Activated B cell treated with CpG ODN at 0.5 μM for 24 hours (primary cell): ENCODE measurements at regions of chr2 and their contacts with region 1.

Region 1: GRCh38 chr2:241102239-241102803 is at the start of gene MTERF4:
- DNase-seq: peak; percentile 85
- ATAC-seq: peak; percentile 92
- H3K4me3 Mint-ChIP-seq: peak within 1 kb of the TSS; percentile 97
- H3K27ac Mint-ChIP-seq: peak within 1 kb of the TSS; percentile 98
- H3K4me1 Mint-ChIP-seq: peaks cover 55% of the 10 kb centered on the region
- H3K27me3 Mint-ChIP-seq: no peaks in the 10 kb centered on the region
- CTCF ChIP-seq: no peak
- total RNA-seq, gene MTERF4: 99.7 and 122 TPM in 2 replicates

Region 2: DNA sequence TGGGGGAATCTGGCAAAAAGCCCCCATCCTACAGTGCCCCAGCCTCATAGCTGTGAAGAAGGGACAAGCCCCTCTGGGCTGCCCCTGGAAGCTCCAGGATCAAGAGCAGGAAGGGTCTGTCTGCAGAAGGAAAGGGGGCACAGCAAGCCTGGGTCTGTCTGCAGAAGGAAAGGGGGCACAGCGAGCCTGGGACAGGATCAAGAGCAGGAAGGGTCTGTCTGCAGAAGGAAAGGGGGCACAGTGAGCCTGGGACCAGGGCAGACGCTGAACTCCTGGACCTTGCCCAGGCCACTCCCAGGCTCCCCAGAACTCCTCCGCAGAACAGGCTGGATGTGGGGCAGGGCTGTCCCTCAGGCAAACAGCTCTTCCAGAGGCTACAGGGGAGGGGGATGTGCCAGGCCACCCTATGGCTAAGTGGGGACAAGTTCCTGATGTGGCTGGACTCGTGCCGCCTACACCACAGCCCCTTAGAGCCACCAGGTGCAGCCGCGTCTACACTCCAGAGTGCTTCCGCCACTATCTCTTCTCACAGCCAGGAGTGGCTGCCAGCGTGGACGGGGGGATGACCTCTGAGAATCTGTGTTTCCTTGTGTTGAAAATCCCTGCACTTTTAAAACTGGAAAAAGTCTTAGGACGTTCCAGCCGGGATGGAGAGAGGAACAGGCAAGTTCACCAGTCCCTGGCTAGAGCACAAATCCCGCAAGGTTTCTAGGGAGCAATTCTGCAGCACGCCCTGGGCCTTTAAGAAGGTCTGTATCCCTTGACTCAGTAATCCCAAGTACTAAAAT is 303.1 kb before region 1 on chr2:
- CTCF ChIA-PET with region 1: no interaction called
- POLR2A ChIA-PET with region 1: no interaction called
- intact Hi-C with region 1: no loop called
- DNase-seq: no peak
- ATAC-seq: no peak
- H3K4me3 Mint-ChIP-seq: no peak overlapping the region
- H3K27ac Mint-ChIP-seq: no peak overlapping the region
- H3K4me1 Mint-ChIP-seq: peaks cover 1% of the 10 kb centered on the region
- H3K27me3 Mint-ChIP-seq: peaks cover 18% of the 10 kb centered on the region
- CTCF ChIP-seq: no peak

Region 3: DNA sequence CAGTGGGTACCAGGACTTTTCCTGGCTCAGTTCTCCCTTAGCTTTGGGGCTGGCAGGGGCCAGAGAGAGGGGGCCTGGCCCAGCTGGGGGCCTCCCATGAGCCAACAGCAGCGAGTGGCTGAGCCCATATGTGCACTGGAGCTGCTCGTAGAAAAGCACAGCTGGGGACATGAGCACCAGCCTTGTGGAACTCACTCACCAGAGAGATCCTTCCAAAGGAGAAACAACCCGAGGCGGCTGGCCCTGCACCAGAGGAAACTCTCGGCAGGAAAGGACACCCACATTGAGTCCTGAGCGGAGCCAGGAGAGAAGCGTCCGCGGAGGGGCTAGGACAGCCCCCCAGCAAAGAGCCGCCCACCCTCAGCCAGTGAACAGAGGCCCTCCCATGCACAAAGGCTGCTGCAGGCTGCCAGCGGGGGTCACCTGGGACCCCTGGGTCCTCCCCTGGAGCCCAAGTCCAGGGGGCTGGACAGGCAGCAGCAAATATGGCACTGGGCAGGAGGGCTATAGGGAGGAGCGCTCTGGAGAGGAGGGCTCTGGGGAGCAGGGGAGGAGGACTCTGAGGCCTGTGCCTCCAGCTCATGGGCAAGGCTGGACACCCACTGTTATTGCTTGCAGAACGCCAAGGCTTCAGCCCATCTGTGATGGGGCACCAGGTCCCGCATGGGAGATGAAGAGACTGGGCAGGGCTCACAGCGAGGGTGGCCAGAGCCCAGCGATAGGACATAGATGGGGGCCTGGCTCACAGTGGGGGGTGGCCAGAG is 146.0 kb before region 1 on chr2:
- CTCF ChIA-PET with region 1: no interaction called
- POLR2A ChIA-PET with region 1: no interaction called
- intact Hi-C with region 1: no loop called
- DNase-seq: no peak
- ATAC-seq: no peak
- H3K4me3 Mint-ChIP-seq: no peak overlapping the region
- H3K27ac Mint-ChIP-seq: no peak overlapping the region
- H3K4me1 Mint-ChIP-seq: no peaks in the 10 kb centered on the region
- H3K27me3 Mint-ChIP-seq: peaks cover 6% of the 10 kb centered on the region
- CTCF ChIP-seq: no peak

Region 4: DNA sequence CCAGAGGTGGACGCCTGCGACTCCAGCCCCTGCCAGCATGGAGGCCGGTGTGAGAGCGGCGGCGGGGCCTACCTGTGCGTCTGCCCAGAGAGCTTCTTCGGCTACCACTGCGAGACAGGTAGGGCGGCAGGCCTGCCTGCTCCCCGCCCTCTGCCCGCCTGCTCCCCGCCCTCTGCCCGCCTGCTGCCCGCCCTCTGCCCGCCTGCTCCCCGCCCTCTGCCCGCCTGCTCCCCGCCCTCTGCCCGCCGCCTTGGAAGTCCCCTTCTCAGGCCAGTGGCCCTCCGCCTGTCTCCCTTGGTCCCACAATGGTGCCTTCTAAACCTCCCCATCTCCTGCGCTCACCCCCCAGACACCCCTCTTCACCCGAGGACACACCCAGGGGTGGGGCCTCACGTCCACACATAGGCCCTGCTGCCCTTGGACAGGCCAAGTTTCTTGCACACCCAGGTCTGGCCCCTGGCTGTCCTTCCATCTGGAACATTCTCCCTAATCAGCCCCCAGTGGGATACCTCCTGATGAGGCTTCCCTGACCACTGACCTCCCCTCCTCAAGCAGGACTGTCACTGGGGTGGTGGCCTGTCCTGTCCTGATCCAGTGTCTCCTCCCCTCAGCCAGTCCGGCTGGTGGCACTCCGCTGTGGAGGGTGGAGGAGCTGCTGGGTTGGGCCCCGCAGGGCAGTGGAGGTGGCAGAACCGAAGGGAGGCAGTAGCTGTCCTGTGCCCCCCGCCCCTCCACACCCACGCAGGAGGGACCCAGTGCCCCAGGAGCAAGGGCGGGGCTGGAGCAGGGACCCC is 38.1 kb before region 1 on chr2:
- CTCF ChIA-PET with region 1: no interaction called
- POLR2A ChIA-PET with region 1: no interaction called
- intact Hi-C with region 1: no loop called
- DNase-seq: peak; percentile 37
- ATAC-seq: peak; percentile 81
- H3K4me3 Mint-ChIP-seq: peak overlapping the region; percentile 55
- H3K27ac Mint-ChIP-seq: no peak overlapping the region
- H3K4me1 Mint-ChIP-seq: peaks cover 2% of the 10 kb centered on the region
- H3K27me3 Mint-ChIP-seq: peaks cover 3% of the 10 kb centered on the region
- CTCF ChIP-seq: no peak

Region 5: DNA sequence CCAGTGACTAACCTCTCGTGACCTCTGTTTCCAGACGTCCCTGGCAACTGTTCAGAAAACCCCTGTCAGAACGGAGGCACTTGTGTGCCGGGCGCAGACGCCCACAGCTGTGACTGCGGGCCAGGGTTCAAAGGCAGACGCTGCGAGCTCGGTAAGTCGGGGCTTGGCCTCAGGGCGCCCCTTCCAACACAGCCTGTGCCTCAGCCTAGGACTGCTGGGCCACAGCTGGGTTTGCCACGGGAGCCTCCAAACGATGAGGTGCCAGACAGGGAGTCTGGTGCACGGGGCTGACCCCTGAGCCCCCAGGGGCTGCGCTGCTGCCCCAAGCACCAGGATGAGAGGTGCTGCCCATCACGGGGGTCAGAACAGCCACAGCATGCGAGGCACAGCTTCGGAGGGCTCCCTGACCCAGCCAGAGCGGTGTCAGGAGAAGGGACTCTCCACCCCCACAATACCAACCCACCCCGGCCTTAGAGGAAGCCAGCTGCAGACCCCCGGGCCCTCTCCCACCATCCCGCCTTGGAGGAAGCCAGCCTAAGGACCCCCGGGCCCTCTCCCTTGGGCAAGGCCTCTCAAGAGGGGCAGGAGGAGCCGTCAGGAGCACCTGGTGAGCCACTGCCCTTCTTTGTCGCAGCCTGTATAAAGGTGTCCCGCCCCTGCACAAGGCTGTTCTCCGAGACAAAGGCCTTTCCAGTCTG is 20.5 kb before region 1 on chr2:
- CTCF ChIA-PET with region 1: interaction called, 10 read pairs
- POLR2A ChIA-PET with region 1: interaction called, 7 read pairs
- intact Hi-C with region 1: loop called (anchors 1 kb)
- DNase-seq: no peak
- ATAC-seq: no peak
- H3K4me3 Mint-ChIP-seq: no peak overlapping the region
- H3K27ac Mint-ChIP-seq: no peak overlapping the region
- H3K4me1 Mint-ChIP-seq: peaks cover 12% of the 10 kb centered on the region
- H3K27me3 Mint-ChIP-seq: no peaks in the 10 kb centered on the region
- CTCF ChIP-seq: no peak

Region 6: DNA sequence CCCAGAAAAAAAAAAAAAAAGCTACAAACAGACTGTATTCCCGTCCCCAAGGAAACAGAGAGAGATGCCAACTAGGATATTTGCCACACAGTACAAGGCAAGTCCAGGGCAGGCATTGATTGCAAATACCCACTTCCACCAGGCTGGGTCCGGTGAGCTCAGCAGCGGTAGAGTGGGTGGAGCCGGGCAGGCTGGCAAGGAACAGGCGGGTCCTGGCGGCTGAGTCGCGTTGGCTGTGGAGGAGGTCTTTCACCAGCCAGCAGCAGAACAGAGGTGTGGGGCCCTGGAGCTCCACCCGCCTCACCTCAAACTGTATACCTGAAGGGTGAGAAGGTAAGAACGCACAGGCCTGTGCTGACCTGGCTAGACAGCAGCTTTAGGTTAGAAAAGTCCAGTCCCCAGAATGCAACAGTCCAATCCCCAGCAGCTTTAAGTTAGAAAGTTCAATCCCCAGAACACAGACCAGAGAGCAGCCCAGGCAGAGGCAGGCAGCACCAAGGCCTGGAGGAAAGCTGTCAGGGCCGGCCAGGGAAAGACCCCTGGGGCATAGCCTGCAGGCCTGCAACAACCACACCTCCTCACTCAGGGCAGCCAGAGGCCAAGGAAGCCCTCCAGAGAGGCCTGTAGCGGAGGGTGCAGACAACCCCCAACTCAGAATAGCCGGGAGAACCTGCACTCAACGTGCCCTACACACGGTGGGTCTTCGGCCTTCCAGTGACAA is 21.7 kb after region 1 on chr2:
- CTCF ChIA-PET with region 1: no interaction called
- POLR2A ChIA-PET with region 1: interaction called, 81 read pairs
- intact Hi-C with region 1: loop called (anchors 1 kb)
- DNase-seq: no peak
- ATAC-seq: no peak
- H3K4me3 Mint-ChIP-seq: no peak overlapping the region
- H3K27ac Mint-ChIP-seq: peak overlapping the region; percentile 69
- H3K4me1 Mint-ChIP-seq: peaks cover 46% of the 10 kb centered on the region
- H3K27me3 Mint-ChIP-seq: no peaks in the 10 kb centered on the region
- CTCF ChIP-seq: no peak

Region 7: GRCh38 chr2:241289597-241289996 is 187.3 kb after region 1 on chr2:
- CTCF ChIA-PET with region 1: no interaction called
- POLR2A ChIA-PET with region 1: no interaction called
- intact Hi-C with region 1: no loop called
- DNase-seq: no peak
- ATAC-seq: no peak
- H3K4me3 Mint-ChIP-seq: no peak overlapping the region
- H3K27ac Mint-ChIP-seq: no peak overlapping the region
- H3K4me1 Mint-ChIP-seq: peaks cover 37% of the 10 kb centered on the region
- H3K27me3 Mint-ChIP-seq: no peaks in the 10 kb centered on the region
- CTCF ChIP-seq: no peak